ENCODE measurements at regions of chr9 and their contacts with region 1.

Region 1: GRCh38 chr9:121545875-121546423 is 46.3 kb upstream of the GGTA1 start:
- DNase-seq: peak; percentile 96 to 97
- H3K4me3 ChIP-seq: peak overlapping the region; percentile 26
- H3K4me3 Mint-ChIP-seq: no peak overlapping the region
- H3K27ac Mint-ChIP-seq: no peak overlapping the region
- H3K4me1 ChIP-seq: no peaks in the 10 kb centered on the region
- H3K4me1 Mint-ChIP-seq: no peaks in the 10 kb centered on the region
- H3K27me3 ChIP-seq: no peaks in the 10 kb centered on the region
- H3K27me3 Mint-ChIP-seq: no peaks in the 10 kb centered on the region
- CTCF ChIP-seq: peak; percentile 92 to 97

Region 2: GRCh38 chr9:121598965-121599871 is 53.3 kb after region 1 on chr9:
- CTCF ChIA-PET with region 1: interaction called, 3 read pairs
- POLR2A ChIA-PET with region 1: no interaction called
- intact Hi-C with region 1: loop called (anchors 2 kb)
- DNase-seq: peak; percentile 80 to 85
- H3K4me3 ChIP-seq: peak overlapping the region; percentile 63
- H3K4me3 Mint-ChIP-seq: peak overlapping the region; percentile 67
- H3K27ac Mint-ChIP-seq: no peak overlapping the region
- H3K4me1 ChIP-seq: 0 out of 2 replicates have a peak, but pooled peaks cover 5% of the 10 kb centered on the region
- H3K4me1 Mint-ChIP-seq: peaks cover 10% of the 10 kb centered on the region
- H3K27me3 ChIP-seq: no peaks in the 10 kb centered on the region
- H3K27me3 Mint-ChIP-seq: no peaks in the 10 kb centered on the region
- CTCF ChIP-seq: no peak

Region 3: GRCh38 chr9:121607434-121608248 is 61.7 kb after region 1 on chr9:
- CTCF ChIA-PET with region 1: no interaction called
- POLR2A ChIA-PET with region 1: no interaction called
- intact Hi-C with region 1: loop called (anchors 2 kb)
- DNase-seq: peak in 1 of 2 experiments; percentile 11
- H3K4me3 ChIP-seq: no peak overlapping the region
- H3K4me3 Mint-ChIP-seq: peak overlapping the region; percentile 16
- H3K27ac Mint-ChIP-seq: peak overlapping the region; percentile 16
- H3K4me1 ChIP-seq: peaks cover 5% of the 10 kb centered on the region
- H3K4me1 Mint-ChIP-seq: peaks cover 16% of the 10 kb centered on the region
- H3K27me3 ChIP-seq: no peaks in the 10 kb centered on the region
- H3K27me3 Mint-ChIP-seq: no peaks in the 10 kb centered on the region
- CTCF ChIP-seq: no peak

Region 4: DNA sequence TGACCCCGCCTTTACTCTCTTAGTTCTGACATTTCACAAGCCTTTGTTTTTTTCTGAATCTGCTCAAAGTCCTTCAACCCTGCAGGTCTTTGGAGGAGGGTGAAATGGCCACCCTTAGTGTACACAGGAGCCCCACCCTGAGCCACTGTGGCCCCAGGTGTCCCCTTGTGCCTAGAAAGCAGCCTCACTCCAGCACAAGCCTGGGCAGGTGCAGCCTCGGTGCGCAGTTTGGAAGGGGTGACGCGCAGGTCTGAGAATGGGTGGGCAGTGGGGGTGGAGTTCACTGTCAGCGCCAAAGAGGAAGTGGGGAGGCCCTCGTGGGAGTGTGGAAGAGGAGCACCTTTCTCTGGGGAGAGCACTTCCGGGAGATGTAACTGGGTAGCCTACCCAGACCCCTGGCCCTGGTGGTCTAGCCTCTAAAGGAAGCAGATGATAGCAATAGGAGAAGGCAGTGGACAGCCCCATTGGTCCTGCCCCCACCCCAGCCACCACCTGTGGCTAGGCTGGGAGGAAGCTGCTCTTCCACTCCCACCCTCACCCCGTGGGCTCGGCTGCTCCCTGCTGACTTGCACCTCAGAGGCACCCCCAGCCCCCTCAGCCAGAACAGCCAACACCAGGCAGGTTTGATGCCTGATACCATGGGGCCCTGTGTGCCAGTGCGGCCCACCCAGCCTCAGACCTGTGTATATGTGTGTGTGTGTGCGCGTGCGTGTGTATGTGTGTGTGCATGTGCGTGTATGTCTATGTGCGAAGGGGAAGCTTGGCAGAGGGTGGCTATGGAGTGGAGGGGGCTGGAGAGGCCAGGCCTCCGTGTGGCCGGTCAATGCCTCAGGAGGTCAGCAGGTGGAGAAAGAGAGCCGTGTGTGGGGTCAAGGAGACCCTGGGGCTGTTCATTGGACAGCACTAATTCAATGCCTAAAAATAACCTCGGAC is 88.6 kb after region 1 on chr9:
- CTCF ChIA-PET with region 1: interaction called, 3 read pairs
- POLR2A ChIA-PET with region 1: no interaction called
- intact Hi-C with region 1: loop called (anchors 2 kb)
- DNase-seq: peak; percentile 72 to 74
- H3K4me3 ChIP-seq: no peak overlapping the region
- H3K4me3 Mint-ChIP-seq: no peak overlapping the region
- H3K27ac Mint-ChIP-seq: no peak overlapping the region
- H3K4me1 ChIP-seq: peaks cover 12% of the 10 kb centered on the region
- H3K4me1 Mint-ChIP-seq: peaks cover 5% of the 10 kb centered on the region
- H3K27me3 ChIP-seq: no peaks in the 10 kb centered on the region
- H3K27me3 Mint-ChIP-seq: no peaks in the 10 kb centered on the region
- CTCF ChIP-seq: peak; percentile 79 to 87

Region 5: DNA sequence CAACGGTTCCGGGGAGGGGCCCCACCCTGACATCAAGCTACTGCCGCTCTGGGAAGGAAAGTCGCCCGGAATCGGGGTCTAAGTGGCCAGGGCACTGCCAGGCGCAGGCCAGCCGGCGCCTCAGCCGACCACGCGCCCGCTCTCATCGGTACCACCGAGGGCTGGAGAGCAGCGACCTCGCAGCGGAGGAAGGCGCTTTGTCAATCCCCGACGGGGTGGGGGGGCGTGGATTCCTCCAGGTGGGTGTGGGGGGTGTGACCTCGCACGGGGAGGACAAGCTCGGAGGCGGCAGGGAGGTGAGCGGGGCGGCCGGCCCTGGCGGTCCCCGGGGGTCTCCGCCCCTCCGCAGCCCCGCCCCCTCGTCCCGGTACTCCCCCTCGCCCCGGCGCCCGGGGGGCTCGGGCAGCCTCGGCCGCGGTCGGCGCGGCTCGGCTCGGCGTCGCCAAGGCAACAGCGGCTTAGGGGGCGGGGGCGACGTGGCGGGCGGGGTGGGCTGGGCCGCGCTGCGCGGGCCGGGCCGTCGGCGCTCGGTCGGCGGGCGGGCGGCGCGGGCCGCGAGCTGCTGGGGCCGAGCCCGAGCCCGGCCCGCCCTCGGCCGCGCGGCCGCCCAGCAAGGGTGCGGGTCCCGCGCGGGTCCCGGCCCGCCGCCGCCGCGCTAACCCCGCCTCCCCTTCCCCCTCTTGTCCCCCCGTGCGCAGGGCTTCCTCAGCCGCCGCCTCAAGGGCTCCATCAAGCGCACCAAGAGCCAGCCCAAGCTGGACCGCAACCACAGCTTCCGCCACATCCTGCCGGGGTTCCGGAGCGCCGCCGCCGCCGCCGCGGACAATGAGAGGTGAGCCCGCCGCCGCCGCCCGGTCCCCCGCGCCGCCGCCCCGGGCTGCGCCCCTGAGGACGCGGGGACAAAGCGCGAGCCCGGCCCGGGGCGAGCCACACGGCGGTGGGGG is 152.9 kb after region 1 on chr9:
- CTCF ChIA-PET with region 1: interaction called, 4 read pairs
- POLR2A ChIA-PET with region 1: no interaction called
- intact Hi-C with region 1: loop called (anchors 5 kb)
- DNase-seq: peak in 1 of 2 experiments; percentile 42
- H3K4me3 ChIP-seq: peak overlapping the region; percentile 50
- H3K4me3 Mint-ChIP-seq: peak overlapping the region; percentile 65
- H3K27ac Mint-ChIP-seq: no peak overlapping the region
- H3K4me1 ChIP-seq: peaks cover 9% of the 10 kb centered on the region; the same call in 1 of the 2 replicates
- H3K4me1 Mint-ChIP-seq: no peaks in the 10 kb centered on the region
- H3K27me3 ChIP-seq: no peaks in the 10 kb centered on the region
- H3K27me3 Mint-ChIP-seq: no peaks in the 10 kb centered on the region
- CTCF ChIP-seq: no peak

Region 6: GRCh38 chr9:121992571-121993212 is 446.7 kb after region 1 on chr9:
- CTCF ChIA-PET with region 1: no interaction called
- POLR2A ChIA-PET with region 1: no interaction called
- intact Hi-C with region 1: loop called (anchors 1 kb)
- DNase-seq: peak; percentile 43 to 55
- H3K4me3 ChIP-seq: no peak overlapping the region
- H3K4me3 Mint-ChIP-seq: no peak overlapping the region
- H3K27ac Mint-ChIP-seq: no peak overlapping the region
- H3K4me1 ChIP-seq: no peaks in the 10 kb centered on the region
- H3K4me1 Mint-ChIP-seq: no peaks in the 10 kb centered on the region
- H3K27me3 ChIP-seq: no peaks in the 10 kb centered on the region
- H3K27me3 Mint-ChIP-seq: no peaks in the 10 kb centered on the region
- CTCF ChIP-seq: peak; percentile 75

Region 7: GRCh38 chr9:122005597-122005996 is 459.6 kb after region 1 on chr9:
- CTCF ChIA-PET with region 1: interaction called, 4 read pairs
- POLR2A ChIA-PET with region 1: no interaction called
- intact Hi-C with region 1: loop called (anchors 5 kb)
- DNase-seq: peak in 1 of 2 experiments; percentile 40
- H3K4me3 ChIP-seq: no peak overlapping the region
- H3K4me3 Mint-ChIP-seq: no peak overlapping the region
- H3K27ac Mint-ChIP-seq: no peak overlapping the region
- H3K4me1 ChIP-seq: no peaks in the 10 kb centered on the region
- H3K4me1 Mint-ChIP-seq: no peaks in the 10 kb centered on the region
- H3K27me3 ChIP-seq: no peaks in the 10 kb centered on the region
- H3K27me3 Mint-ChIP-seq: peaks cover 3% of the 10 kb centered on the region
- CTCF ChIP-seq: peak in 1 of 2 experiments; percentile 58

Region 8: GRCh38 chr9:122350638-122351355 is 804.8 kb after region 1 on chr9:
- CTCF ChIA-PET with region 1: no interaction called
- POLR2A ChIA-PET with region 1: no interaction called
- intact Hi-C with region 1: no loop called
- DNase-seq: peak; percentile 72 to 88
- H3K4me3 ChIP-seq: no peak overlapping the region
- H3K4me3 Mint-ChIP-seq: no peak overlapping the region
- H3K27ac Mint-ChIP-seq: no peak overlapping the region
- H3K4me1 ChIP-seq: no peaks in the 10 kb centered on the region; the same call in 1 of the 2 replicates
- H3K4me1 Mint-ChIP-seq: peaks cover 6% of the 10 kb centered on the region
- H3K27me3 ChIP-seq: no peaks in the 10 kb centered on the region
- H3K27me3 Mint-ChIP-seq: peaks cover 4% of the 10 kb centered on the region
- CTCF ChIP-seq: peak; percentile 94 to 95